ENCODE measurements at regions of chr22 and their contacts with region 1.

Region 1: GRCh38 chr22:35728639-35729308 is 11.1 kb downstream of the APOL5 start:
- DNase-seq: no peak
- H3K4me3 ChIP-seq: no peak overlapping the region
- H3K27ac ChIP-seq: no peak overlapping the region
- H3K4me1 ChIP-seq: no peaks in the 10 kb centered on the region
- H3K27me3 ChIP-seq: no peaks in the 10 kb centered on the region
- CTCF ChIP-seq: no peak
- POLR2A ChIP-seq: no peak

Region 2: GRCh38 chr22:35638410-35638809 is 90.4 kb before region 1 on chr22:
- intact Hi-C with region 1: loop called (anchors 5 kb)
- DNase-seq: no peak
- H3K4me3 ChIP-seq: no peak overlapping the region
- H3K27ac ChIP-seq: peak overlapping the region; percentile 59 to 63
- H3K4me1 ChIP-seq: no peaks in the 10 kb centered on the region
- H3K27me3 ChIP-seq: no peaks in the 10 kb centered on the region
- CTCF ChIP-seq: no peak
- POLR2A ChIP-seq: no peak

Region 3: DNA sequence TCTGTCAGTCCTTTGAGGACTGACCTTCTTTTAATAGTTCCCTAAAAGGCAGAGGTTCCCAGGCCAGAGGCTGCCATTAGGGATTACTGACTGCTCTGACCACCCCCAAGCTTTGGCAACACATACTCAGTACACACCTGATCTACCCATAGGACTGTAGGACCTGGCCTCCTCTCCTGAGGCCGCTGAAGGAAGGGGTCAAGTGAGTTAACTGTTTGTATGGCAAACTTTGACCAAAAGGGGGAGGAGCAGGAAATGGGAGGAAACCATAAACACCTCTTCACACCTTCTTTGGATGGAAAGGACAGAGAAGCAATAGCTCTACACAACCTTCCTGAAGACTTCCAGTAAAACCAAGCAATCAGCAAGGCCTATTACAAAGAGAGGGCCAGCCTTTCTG is 92.9 kb after region 1 on chr22:
- intact Hi-C with region 1: no loop called
- DNase-seq: no peak
- H3K4me3 ChIP-seq: no peak overlapping the region
- H3K27ac ChIP-seq: no peak overlapping the region
- H3K4me1 ChIP-seq: no peaks in the 10 kb centered on the region
- H3K27me3 ChIP-seq: no peaks in the 10 kb centered on the region
- CTCF ChIP-seq: no peak
- POLR2A ChIP-seq: no peak

Measured in prostate gland (tissue), 2 donors.